HAP-1 (cell line): ENCODE measurements at regions of chr18 and their contacts with region 1.

Region 1: GRCh38 chr18:58761241-58761969 is 90.1 kb downstream of the MALT1 start:
- DNase-seq: no peak
- H3K4me3 ChIP-seq: no peak overlapping the region
- H3K4me1 ChIP-seq: no peaks in the 10 kb centered on the region
- H3K27me3 ChIP-seq: peaks cover 4% of the 10 kb centered on the region; the same call in 1 of the 2 replicates

Region 2: DNA sequence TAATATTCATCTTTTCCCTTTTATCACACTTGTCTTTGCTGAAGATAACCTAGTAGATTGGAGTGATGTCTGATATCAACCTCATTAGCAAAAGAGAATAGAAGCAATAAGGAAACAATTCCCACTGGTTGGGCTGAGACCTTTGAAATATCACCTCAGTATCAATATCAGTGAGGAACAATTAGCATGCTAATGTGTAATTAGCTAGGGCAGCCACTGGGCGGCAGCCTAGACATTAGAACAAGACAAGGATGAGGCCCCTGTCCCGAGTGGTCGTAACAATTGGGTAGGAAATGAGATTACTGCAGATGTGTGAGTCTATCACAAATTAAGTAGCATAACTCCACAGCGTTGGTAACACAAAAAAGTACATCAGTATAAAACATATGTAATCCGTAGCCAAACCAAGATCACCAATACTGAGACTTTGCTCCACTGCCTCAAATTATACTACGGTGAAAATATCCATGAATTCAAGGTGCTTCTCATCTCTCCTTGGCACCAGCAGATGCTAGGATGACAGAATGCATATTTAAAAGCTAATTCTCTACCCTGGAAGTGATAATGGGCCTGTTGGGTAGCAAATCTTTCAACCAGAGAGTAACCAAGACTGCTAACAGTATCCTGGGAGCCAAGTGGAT is 231.6 kb before region 1 on chr18:
- in situ Hi-C with region 1: loop called (anchors 5 kb)
- DNase-seq: peak; percentile 70 to 82
- H3K4me3 ChIP-seq: no peak overlapping the region
- H3K4me1 ChIP-seq: no peaks in the 10 kb centered on the region
- H3K27me3 ChIP-seq: peaks cover 23% of the 10 kb centered on the region

Region 3: DNA sequence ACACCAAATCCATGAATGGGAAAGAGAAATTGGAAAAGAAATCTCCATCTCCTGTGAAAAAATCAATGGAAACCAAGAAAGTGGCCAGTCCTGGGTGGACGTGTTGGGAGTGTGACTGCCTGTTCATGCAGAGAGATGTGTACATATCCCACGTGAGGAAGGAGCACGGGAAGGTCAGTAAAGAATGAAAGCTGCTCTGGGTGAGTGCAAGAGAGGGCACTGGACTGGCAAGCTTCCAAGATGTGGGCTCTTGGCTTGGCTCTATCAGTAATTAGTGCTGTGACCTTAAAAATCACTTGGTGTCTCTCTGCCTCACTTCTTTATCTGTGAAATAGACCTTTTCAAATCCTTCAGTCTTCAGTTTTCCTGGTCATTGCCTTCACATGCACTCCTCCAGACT is 192.2 kb after region 1 on chr18:
- in situ Hi-C with region 1: no loop called
- DNase-seq: no peak
- H3K4me3 ChIP-seq: no peak overlapping the region
- H3K4me1 ChIP-seq: peaks cover 4% of the 10 kb centered on the region; the same call in 1 of the 2 replicates
- H3K27me3 ChIP-seq: no peaks in the 10 kb centered on the region

Region 4: GRCh38 chr18:59352250-59352855 is 590.9 kb after region 1 on chr18:
- in situ Hi-C with region 1: no loop called
- DNase-seq: no peak
- H3K4me3 ChIP-seq: no peak overlapping the region
- H3K4me1 ChIP-seq: peaks cover 6% of the 10 kb centered on the region
- H3K27me3 ChIP-seq: no peaks in the 10 kb centered on the region